CD8-positive, alpha-beta memory T cell (primary cell): ENCODE measurements at regions of chr16 and their contacts with region 1.

Region 1: DNA sequence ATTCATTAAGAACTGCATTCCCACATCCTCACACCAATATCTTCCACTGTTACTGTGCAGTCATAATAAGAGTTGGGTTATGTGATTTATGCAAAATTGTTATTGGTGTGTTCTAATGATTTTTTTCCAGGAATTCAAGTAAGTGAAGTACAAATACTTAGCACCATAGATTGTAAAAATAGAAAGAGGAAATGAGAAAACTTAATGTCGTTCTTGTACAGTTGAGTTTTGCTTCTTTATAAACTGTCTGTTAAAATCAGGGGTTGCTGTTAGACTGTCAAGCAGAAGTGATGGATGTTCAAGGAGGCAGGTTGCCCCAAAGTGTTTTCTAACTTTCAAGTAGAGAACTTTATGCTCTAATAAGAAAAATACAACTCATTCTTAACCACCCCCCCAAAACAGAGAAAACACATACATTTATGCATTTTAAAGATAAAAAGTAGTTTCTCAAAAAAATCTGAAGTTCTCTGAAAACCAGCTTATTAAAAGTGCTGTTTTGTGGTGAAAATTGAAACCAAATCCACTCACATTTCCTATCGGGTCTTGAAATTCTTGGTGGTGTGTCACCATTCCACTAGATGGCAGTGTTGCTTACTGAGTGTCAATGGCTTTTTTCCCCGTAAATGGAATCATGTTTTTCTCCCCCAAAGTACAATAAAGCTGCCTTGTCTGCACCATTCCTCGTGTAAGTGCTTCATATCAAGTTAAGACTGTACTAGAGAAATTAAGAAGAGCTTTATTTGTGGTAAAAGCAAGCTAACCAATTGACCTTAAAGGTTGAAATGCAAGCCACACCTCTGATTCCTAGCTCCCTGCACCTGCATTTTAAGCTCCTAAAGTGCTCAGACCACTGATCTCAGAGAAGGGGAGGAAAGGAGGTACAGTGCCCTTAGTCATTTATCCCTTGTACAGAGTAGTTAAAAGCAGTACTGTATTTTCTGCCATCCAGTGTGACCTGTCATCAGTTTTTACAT is 4.7 kb upstream of the IGSF6 start:
- DNase-seq: peak in 4 of 5 donors; percentile 24 to 64 (median 54)
- H3K4me3 ChIP-seq: no peak overlapping the region
- H3K4me3 Mint-ChIP-seq: peak overlapping the region in 3 of 7 donors; percentile 16 to 54 (median 30)
- H3K27ac ChIP-seq: no peak overlapping the region
- H3K27ac Mint-ChIP-seq: peak overlapping the region; percentile 22 to 79 (median 64)
- H3K4me1 ChIP-seq: peaks cover 24% of the 10 kb centered on the region
- H3K4me1 Mint-ChIP-seq: peaks cover 30 to 54% (median 51%) of the 10 kb centered on the region in 3 donors
- H3K27me3 ChIP-seq: no peaks in the 10 kb centered on the region
- H3K27me3 Mint-ChIP-seq: no peaks in the 10 kb centered on the region

Region 2: DNA sequence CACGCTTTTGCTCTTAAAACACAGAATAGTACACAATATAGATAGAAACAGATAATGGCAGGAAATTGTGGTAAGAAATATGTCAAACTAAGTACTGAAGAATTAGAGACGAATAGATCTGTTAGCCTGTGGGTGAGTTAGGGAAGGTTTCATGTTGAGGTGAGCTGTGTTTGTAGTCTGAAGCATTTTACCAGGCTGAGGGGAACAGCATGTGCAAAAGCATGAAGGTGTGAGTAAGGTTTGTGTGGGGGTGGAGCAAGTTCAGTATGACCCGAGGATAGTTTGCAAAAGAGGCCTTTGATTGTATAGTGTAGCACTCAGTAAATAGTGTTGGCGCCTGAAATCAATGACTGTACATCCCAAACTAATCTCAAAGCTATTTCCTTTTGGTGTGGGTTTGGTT is 18.5 kb before region 1 on chr16:
- CTCF ChIA-PET with region 1: interaction called, 12 read pairs
- POLR2A ChIA-PET with region 1: no interaction called
- DNase-seq: peak in 1 of 5 donors; percentile 22
- H3K4me3 ChIP-seq: no peak overlapping the region
- H3K4me3 Mint-ChIP-seq: peak overlapping the region in 6 of 7 donors; percentile 1 to 60 (median 30)
- H3K27ac ChIP-seq: no peak overlapping the region
- H3K27ac Mint-ChIP-seq: peak overlapping the region; percentile 14 to 89 (median 82)
- H3K4me1 ChIP-seq: peaks cover 30% of the 10 kb centered on the region
- H3K4me1 Mint-ChIP-seq: peaks cover 29 to 39% (median 39%) of the 10 kb centered on the region in 3 donors
- H3K27me3 ChIP-seq: no peaks in the 10 kb centered on the region
- H3K27me3 Mint-ChIP-seq: no peaks in the 10 kb centered on the region

Region 3: GRCh38 chr16:21646721-21647561 is 10.1 kb before region 1 on chr16:
- CTCF ChIA-PET with region 1: interaction called, 31 read pairs
- POLR2A ChIA-PET with region 1: interaction called, 5 read pairs
- DNase-seq: peak; percentile 42 to 85 (median 72)
- H3K4me3 ChIP-seq: peak overlapping the region; percentile 12
- H3K4me3 Mint-ChIP-seq: peak overlapping the region; percentile 68 to 82 (median 78)
- H3K27ac ChIP-seq: peak overlapping the region; percentile 26
- H3K27ac Mint-ChIP-seq: peak overlapping the region; percentile 85 to 98 (median 92)
- H3K4me1 ChIP-seq: peaks cover 57% of the 10 kb centered on the region
- H3K4me1 Mint-ChIP-seq: peaks cover 54 to 70% (median 60%) of the 10 kb centered on the region in 3 donors
- H3K27me3 ChIP-seq: no peaks in the 10 kb centered on the region
- H3K27me3 Mint-ChIP-seq: no peaks in the 10 kb centered on the region

Region 4: DNA sequence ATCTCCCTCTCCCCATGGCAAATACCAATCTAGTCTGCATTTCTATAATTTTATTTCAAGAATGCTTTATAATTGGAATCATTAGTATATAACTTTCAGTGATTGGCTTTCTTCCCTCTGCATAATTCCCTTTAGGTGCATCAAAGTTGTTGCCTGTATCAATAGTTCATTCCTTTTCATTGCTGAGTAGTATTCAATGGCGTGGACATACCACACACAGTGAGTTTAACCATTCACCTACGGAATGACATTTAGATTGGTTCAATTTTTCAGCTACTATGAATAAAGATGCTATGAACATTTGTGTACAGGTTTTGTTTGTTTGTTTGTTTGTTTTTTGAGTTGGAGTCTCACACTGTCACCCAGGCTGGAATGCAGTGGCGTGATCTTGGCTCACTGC is 16.4 kb after region 1 on chr16:
- CTCF ChIA-PET with region 1: interaction called, 12 read pairs
- POLR2A ChIA-PET with region 1: interaction called, 3 read pairs
- DNase-seq: no peak
- H3K4me3 ChIP-seq: no peak overlapping the region
- H3K4me3 Mint-ChIP-seq: no peak overlapping the region
- H3K27ac ChIP-seq: no peak overlapping the region
- H3K27ac Mint-ChIP-seq: peak overlapping the region in 1 of 8 donors; percentile 5
- H3K4me1 ChIP-seq: no peaks in the 10 kb centered on the region
- H3K4me1 Mint-ChIP-seq: no peaks in the 10 kb centered on the region
- H3K27me3 ChIP-seq: no peaks in the 10 kb centered on the region
- H3K27me3 Mint-ChIP-seq: peaks cover 4 to 7% of the 10 kb centered on the region in 2 donors

Region 5: GRCh38 chr16:21684199-21684598 is 27.1 kb after region 1 on chr16:
- CTCF ChIA-PET with region 1: interaction called, 10 read pairs
- POLR2A ChIA-PET with region 1: no interaction called
- DNase-seq: peak in 3 of 5 donors; percentile 5 to 18 (median 15)
- H3K4me3 ChIP-seq: no peak overlapping the region
- H3K4me3 Mint-ChIP-seq: no peak overlapping the region
- H3K27ac ChIP-seq: no peak overlapping the region
- H3K27ac Mint-ChIP-seq: no peak overlapping the region
- H3K4me1 ChIP-seq: no peaks in the 10 kb centered on the region
- H3K4me1 Mint-ChIP-seq: no peaks in the 10 kb centered on the region
- H3K27me3 ChIP-seq: no peaks in the 10 kb centered on the region
- H3K27me3 Mint-ChIP-seq: peaks cover 7 to 17% of the 10 kb centered on the region in 2 donors

Region 6: GRCh38 chr16:21701271-21701670 is 44.2 kb after region 1 on chr16:
- CTCF ChIA-PET with region 1: interaction called, 103 read pairs
- POLR2A ChIA-PET with region 1: interaction called, 6 read pairs
- DNase-seq: no peak
- H3K4me3 ChIP-seq: no peak overlapping the region
- H3K4me3 Mint-ChIP-seq: no peak overlapping the region
- H3K27ac ChIP-seq: no peak overlapping the region
- H3K27ac Mint-ChIP-seq: no peak overlapping the region
- H3K4me1 ChIP-seq: no peaks in the 10 kb centered on the region
- H3K4me1 Mint-ChIP-seq: no peaks in the 10 kb centered on the region
- H3K27me3 ChIP-seq: no peaks in the 10 kb centered on the region
- H3K27me3 Mint-ChIP-seq: peaks cover 0 to 4% of the 10 kb centered on the region in 2 donors

Region 7: DNA sequence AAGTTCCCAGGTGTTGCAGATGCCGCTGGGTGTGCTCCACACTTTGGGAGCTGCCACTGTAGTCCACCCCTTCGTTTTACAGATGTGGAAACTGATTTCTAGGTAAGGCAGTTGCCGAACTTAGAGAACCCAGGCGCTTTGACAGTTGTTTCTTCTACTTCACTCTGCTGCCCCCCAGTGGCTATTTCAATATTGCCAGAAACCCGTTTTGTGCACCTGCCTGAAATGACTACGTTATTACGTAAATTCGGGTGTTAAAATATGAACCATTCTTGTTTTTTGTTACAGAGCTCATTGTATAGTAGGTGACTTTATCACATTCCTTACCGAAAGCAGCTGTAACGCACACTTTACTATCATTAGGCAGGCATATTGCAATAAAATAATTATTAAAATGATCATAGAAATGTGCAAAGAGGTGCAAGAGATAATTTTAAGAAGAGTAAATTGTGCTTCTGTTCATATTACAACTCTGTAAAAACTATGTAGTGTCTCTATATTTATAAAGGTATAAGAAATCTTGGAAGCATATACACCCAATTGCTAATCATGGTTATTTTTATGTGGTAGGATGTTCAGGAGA is 51.5 kb after region 1 on chr16:
- CTCF ChIA-PET with region 1: interaction called, 103 read pairs
- POLR2A ChIA-PET with region 1: no interaction called
- DNase-seq: peak; percentile 67 to 87 (median 74)
- H3K4me3 ChIP-seq: no peak overlapping the region
- H3K4me3 Mint-ChIP-seq: peak overlapping the region in 1 of 7 donors; percentile 18
- H3K27ac ChIP-seq: no peak overlapping the region
- H3K27ac Mint-ChIP-seq: no peak overlapping the region
- H3K4me1 ChIP-seq: peaks cover 7% of the 10 kb centered on the region
- H3K4me1 Mint-ChIP-seq: peaks cover 2 to 6% (median 5%) of the 10 kb centered on the region in 3 donors
- H3K27me3 ChIP-seq: no peaks in the 10 kb centered on the region
- H3K27me3 Mint-ChIP-seq: peaks cover 0 to 1% of the 10 kb centered on the region in 2 donors